HEK293 (cell line): ENCODE measurements at regions of chr9 and their contacts with region 1.

Region 1: DNA sequence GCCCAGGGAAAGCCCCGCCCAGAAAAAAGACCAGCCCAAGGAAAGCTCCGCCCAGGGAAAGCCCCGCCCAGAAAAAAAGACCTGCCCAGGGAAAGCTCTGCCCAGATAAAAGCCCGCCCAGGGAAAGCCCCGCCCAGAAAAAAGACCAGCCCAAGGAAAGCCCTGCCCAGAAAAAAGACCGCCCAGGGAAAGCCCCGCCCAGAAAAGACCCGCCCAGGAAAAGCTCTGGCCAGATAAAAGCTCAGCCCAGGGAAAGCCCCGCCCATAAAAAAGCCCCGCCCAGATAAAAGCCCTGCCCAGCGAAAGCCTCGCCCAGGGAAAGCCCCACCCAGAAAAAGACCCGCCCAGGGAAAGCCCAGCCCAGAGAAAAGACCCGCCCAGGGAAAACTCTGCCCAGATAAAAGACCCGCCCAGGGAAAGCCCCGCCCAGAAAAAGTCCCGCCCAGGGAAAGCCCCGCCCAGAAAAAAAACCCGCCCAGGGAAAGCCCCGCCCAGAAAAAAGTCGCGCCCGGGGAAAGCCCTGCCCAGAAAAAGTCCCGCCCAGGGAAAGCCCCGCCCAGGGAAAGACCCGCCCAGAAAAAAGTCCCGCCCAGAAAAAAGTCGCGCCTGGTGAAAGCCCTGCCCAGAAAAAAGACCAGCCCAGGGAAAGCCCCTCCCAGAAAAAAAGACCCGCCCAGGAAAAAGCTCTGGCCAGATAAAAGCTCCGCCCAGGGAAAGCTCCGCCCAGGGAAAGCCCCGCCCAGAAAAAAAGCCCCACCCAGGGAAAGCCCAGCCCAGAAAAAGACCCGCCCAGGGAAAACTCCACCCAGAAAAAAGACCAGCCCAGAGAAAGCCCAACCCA is 11.9 kb downstream of the GRIN1 start:
- H3K4me3 ChIP-seq: no peak overlapping the region
- H3K27ac ChIP-seq: no peak overlapping the region
- H3K4me1 ChIP-seq: no peaks in the 10 kb centered on the region
- CTCF ChIP-seq: no peak

Region 2: GRCh38 chr9:137168905-137169856 is 18.3 kb after region 1 on chr9:
- CTCF ChIA-PET with region 1: no interaction called
- POLR2A ChIA-PET with region 1: interaction called, 14 read pairs
- H3K4me3 ChIP-seq: peak overlapping the region; percentile 40
- H3K27ac ChIP-seq: no peak overlapping the region; the same call in 1 of the 2 replicates
- H3K4me1 ChIP-seq: no peaks in the 10 kb centered on the region; the same call in 1 of the 2 replicates
- CTCF ChIP-seq: peak; percentile 64

Region 3: GRCh38 chr9:137217276-137218211 is 66.7 kb after region 1 on chr9:
- CTCF ChIA-PET with region 1: no interaction called
- POLR2A ChIA-PET with region 1: interaction called, 15 read pairs
- H3K4me3 ChIP-seq: no peak overlapping the region
- H3K27ac ChIP-seq: no peak overlapping the region
- H3K4me1 ChIP-seq: no peaks in the 10 kb centered on the region; the same call in 1 of the 2 replicates
- CTCF ChIP-seq: peak; percentile 59

Region 4: DNA sequence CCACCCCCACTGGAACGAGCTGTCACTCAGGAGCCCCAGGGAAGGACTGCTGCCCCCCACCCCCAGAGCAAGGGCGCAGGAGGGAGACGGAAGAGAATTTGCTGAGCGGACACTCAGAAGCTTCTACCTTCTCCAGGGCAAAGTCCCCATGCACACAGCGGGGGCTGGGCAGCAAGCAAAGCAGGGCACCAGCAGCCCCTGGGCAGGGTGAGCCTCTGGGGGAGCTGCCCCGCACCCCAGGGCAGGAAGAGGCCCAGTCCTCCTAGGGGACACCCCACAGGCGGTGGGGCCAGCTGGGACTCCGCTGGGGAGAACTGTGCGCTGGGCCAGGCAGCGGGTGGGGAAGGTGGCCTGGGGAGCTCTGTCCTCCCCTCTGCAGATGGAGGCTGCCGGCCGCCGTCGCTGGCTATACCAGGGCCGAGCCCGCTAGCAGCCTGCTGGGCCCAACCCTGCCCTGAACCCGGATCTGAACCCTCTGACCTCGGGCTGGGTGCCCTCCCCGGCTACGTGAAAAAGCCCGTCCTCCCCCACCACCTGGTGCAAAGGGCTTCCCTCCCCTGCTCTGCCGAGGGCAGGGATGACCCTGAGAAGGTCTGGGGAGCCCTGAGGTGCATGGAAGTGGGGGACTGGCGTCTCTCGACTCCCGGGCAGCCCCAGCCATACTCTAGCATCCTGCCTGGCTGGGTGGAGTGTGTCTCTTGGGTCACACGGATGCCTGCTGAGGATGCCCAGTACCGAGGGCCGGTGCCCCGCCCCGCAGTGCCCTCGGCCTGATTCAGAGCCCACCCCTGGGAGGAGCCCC is 79.3 kb after region 1 on chr9:
- CTCF ChIA-PET with region 1: no interaction called
- POLR2A ChIA-PET with region 1: interaction called, 13 read pairs
- H3K4me3 ChIP-seq: no peak overlapping the region
- H3K27ac ChIP-seq: no peak overlapping the region
- H3K4me1 ChIP-seq: no peaks in the 10 kb centered on the region
- CTCF ChIP-seq: no peak